OCI-LY7 (cell line): ENCODE measurements at regions of chr12 and their contacts with region 1.

Region 1: DNA sequence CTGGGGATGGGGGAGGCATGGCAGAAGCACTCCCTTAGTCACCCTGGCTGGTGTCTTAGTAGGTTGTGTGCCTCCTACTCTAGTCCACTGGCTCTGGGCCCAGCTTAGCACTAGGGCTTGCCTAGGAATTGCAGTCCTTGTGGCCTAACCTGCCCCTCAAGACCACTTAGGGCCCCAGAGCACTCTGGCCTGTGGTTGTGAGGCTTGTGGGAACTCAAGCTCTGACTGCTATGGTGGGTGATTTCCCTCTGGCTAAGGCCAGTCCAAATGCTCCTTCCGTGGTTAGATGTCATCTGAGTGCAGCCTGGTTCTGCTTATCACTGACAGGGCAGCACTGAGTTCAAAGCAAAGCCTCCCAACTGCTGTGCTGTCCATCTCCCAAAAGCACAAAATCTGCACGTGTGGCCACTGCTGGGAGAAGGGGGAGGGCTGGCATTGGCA is 20.2 kb downstream of the FGD4 start:
- DNase-seq: no peak
- H3K4me3 ChIP-seq: no peak overlapping the region
- H3K27ac ChIP-seq: no peak overlapping the region
- H3K4me1 ChIP-seq: no peaks in the 10 kb centered on the region
- CTCF ChIP-seq: no peak

Region 2: GRCh38 chr12:32390572-32391219 is 28.8 kb before region 1 on chr12:
- CTCF ChIA-PET with region 1: no interaction called
- POLR2A ChIA-PET with region 1: no interaction called
- intact Hi-C with region 1: no loop called
- DNase-seq: no peak
- H3K4me3 ChIP-seq: no peak overlapping the region
- H3K27ac ChIP-seq: no peak overlapping the region
- H3K4me1 ChIP-seq: peaks cover 5% of the 10 kb centered on the region
- CTCF ChIP-seq: no peak

Region 3: GRCh38 chr12:32560520-32560919 is 141.0 kb after region 1 on chr12:
- CTCF ChIA-PET with region 1: no interaction called
- POLR2A ChIA-PET with region 1: interaction called, 12 read pairs
- intact Hi-C with region 1: no loop called
- DNase-seq: peak; percentile 49
- H3K4me3 ChIP-seq: no peak overlapping the region
- H3K27ac ChIP-seq: peak overlapping the region; percentile 84
- H3K4me1 ChIP-seq: peaks cover 38% of the 10 kb centered on the region
- CTCF ChIP-seq: peak; percentile 61